Left ventricle myocardium inferior (tissue), 1 donor: ENCODE measurements at regions of chr12 and their contacts with region 1.

Region 1: GRCh38 chr12:45268672-45269411 is 52.9 kb downstream of the ANO6 start:
- DNase-seq: peak; percentile 80
- H3K4me3 ChIP-seq: peak overlapping the region; percentile 32
- H3K27ac ChIP-seq: peak overlapping the region; percentile 77
- H3K4me1 ChIP-seq: peaks cover 69% of the 10 kb centered on the region
- H3K27me3 ChIP-seq: no peaks in the 10 kb centered on the region
- CTCF ChIP-seq: peak; percentile 67

Region 2: DNA sequence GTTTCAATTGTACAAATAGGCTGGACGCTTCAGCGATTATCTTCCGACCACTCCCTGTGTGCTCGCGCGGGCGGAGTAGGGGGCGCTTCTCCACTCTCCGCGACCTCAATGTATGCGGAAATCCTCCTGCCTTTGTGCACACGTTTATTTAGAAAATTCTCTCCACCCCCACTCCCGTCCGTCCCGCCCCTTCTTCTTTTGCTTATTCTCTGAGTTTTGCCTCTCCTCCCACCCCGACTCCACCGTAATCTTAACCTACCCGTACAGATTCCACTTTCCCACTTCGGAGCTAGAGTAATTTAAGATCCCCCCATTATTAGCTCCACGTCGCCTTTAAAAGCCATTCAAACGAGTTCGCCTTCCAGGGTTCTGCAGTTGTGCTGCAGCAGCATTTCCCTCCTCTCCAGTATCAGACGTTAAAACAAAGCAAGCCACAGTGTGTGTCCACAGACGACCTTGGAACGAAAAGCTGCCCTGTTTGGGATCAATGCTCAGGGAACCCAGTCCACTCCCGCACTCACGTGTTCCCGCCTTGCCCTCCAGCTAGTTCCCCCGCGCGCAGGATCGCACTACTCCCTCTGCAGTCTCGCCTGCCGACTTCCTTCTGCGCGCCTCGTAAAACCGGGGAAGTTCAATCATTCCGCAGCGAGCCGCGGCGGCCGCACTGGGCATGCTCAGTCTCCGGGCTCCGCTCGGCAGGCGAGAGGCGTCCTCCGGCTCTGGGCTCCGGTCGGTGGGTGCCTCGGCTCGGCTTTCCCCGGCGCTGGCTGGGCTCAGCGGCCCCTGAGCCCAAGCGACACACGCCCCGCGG is 53.2 kb before region 1 on chr12 and contains the start of gene ANO6:
- intact Hi-C with region 1: loop called (anchors 10 kb)
- DNase-seq: peak; percentile 89
- H3K4me3 ChIP-seq: peak within 1 kb of the TSS; percentile 88
- H3K27ac ChIP-seq: peak within 1 kb of the TSS; percentile 94
- H3K4me1 ChIP-seq: peaks cover 52% of the 10 kb centered on the region
- H3K27me3 ChIP-seq: no peaks in the 10 kb centered on the region
- CTCF ChIP-seq: no peak
- total RNA-seq, gene ANO6: 46.2 TPM

Region 3: DNA sequence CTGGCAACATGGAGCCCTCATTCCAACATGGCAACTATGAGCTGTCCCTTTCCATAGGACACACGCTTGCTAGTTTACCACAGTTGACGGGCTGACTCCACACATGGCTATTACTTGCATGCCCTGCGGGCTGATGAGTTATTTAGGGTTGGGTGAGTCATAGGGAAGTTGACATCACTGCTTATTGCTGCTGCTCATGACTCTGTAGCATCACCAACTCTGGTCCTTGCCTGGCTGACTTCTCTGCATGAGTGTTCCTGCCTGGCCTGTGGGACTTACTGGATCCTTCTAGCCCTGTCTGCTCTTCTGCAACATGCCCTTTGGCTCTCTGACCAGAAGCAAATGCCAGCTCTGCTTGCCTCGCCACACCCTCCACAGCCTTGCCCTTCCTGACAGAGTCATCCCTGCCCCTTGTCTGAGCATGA is 146.6 kb after region 1 on chr12:
- intact Hi-C with region 1: no loop called
- DNase-seq: peak; percentile 34
- H3K4me3 ChIP-seq: no peak overlapping the region
- H3K27ac ChIP-seq: peak overlapping the region; percentile 54
- H3K4me1 ChIP-seq: peaks cover 11% of the 10 kb centered on the region
- H3K27me3 ChIP-seq: no peaks in the 10 kb centered on the region
- CTCF ChIP-seq: no peak